ENCODE measurements at regions of chr17 and their contacts with region 1.

Region 1: GRCh38 chr17:57739402-57740392 is 5.4 kb downstream of the CCDC182 start:
- DNase-seq: no peak

Region 2: GRCh38 chr17:57699751-57700219 is 39.9 kb before region 1 on chr17:
- intact Hi-C with region 1: loop called in 1 of 2 experiments (anchors 1 kb)
- DNase-seq: no peak

Region 3: DNA sequence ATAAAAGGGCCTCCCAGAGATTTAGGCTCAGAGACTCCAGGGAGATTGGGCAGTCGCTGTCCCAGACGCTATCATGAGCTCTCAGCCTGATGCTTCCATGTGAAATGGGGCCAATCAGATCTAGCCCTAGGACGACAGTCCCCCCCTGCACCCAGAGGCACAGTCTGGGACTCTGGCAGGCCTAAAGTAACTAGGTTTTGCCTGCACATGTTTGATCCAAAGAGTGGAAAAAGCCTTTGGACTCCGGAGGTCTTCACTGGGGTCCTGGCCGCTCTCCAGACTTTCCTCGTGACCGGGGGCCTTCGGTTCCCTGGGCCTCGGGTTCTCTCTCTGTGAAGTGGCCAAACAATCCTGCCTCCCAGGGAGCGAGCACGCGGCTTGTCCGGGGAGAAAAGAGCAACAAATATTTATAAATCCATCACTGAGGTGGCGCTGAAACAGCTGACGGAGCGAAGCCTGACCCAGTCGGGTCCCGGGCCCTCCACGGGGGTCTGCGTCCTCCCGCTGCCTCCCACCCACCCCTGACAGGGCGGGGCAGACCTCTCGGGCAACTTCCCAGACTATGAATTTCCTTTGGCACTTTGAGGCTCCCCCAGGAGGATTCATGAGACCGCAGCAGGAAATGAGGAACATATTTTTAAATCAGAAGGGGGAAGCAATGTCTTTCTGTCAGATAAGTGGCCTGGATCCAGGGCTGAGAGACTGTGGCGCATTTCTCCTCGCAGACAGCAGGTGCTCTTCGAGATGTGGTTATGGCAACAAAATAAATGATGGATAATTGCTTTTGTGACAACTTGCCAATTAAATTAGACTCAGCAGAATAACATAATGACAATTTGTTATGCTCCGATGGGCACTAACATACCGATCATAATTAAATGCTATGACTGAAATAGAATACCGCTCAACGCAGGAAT is 71.3 kb after region 1 on chr17:
- intact Hi-C with region 1: no loop called
- DNase-seq: no peak

Measured in posterior vena cava (tissue), 2 donors.